ENCODE measurements at regions of chr10 and their contacts with region 1.

Region 1: DNA sequence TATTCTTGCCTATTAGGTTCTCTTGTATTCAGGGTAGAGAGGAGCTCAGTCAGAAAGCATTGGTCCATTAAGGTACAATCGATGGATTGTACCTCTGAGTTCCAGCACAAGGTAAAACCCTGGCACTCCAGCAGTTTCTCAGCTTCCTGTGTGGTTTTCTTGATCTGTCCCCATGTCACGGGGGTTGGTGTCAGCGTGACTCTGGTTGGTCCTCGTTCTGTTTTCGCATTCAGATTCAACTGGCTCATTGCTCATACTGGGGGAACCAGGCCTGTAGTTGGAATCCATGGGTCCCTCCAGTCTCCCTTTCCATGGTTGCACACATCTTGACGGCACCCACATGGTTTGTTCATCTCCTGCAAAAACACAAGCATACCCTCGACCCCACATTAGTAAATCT is 32.7 kb upstream of the RASGEF1A start:
- DNase-seq: peak in 12 of 14 experiments; percentile 23 to 86 (median 44)
- ATAC-seq: peak; percentile 88
- H3K4me3 ChIP-seq: no peak overlapping the region
- H3K4me3 Mint-ChIP-seq: peak overlapping the region; percentile 9
- H3K27ac ChIP-seq: peak overlapping the region in 1 of 2 donors; percentile 24
- H3K27ac Mint-ChIP-seq: peak overlapping the region; percentile 78
- H3K4me1 ChIP-seq: peaks cover 43% of the 10 kb centered on the region
- H3K4me1 Mint-ChIP-seq: peaks cover 72% of the 10 kb centered on the region
- H3K27me3 ChIP-seq: no peaks in the 10 kb centered on the region
- H3K27me3 Mint-ChIP-seq: peaks cover 8% of the 10 kb centered on the region
- CTCF ChIP-seq: no peak

Region 2: DNA sequence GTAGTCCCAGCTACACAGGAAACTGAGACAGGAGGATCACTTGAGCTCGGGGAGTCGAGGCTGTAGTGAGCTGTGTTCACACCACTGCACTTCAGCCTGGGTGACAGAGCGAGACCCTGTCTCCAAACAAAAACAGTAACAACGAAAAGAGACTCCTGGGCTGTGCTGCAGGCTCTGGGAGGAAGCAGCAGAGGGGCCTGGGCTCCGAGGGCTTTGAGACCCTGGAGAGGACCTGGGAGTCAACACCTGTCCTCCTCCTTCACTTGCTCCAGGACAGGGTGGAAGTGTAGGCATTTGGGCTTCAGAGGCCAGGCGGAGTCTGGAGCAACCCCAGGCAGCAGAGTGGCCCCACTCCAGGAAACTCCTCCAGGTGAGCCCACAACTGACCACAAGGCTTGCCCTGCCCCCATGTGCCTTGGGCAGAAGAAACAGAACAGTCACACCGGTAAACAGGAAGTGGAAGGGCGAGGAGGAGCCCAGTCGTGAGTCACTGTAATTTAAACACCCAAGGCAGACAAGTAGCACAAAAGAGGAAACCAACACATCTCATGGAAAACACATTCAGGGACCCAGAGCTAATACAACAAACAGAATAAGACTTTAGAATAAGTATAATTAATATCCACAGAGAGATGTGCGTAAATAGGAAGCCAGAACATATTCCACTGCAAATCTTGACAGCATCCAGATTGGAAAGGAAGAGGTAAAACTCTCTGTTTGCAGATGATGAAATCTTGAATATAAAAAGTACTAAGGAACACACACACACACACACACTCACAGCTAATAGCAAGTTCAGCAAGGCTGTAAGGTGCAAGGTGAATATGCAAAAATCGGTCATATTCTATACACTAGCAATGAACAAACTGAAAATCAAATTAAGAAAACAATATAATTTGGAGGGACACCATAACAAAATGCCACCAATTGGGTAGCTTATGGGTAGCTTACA is 12.2 kb before region 1 on chr10:
- CTCF ChIA-PET with region 1: interaction called, 17 read pairs
- POLR2A ChIA-PET with region 1: interaction called, 10 read pairs
- intact Hi-C with region 1: no loop called
- DNase-seq: peak in 13 of 14 experiments; percentile 39 to 84 (median 62)
- ATAC-seq: peak; percentile 89
- H3K4me3 ChIP-seq: peak overlapping the region; percentile 17
- H3K4me3 Mint-ChIP-seq: peak overlapping the region; percentile 13
- H3K27ac ChIP-seq: peak overlapping the region; percentile 21 to 68
- H3K27ac Mint-ChIP-seq: peak overlapping the region; percentile 77
- H3K4me1 ChIP-seq: peaks cover 38% of the 10 kb centered on the region
- H3K4me1 Mint-ChIP-seq: peaks cover 41% of the 10 kb centered on the region
- H3K27me3 ChIP-seq: peaks cover 0 to under 1% of the 10 kb centered on the region in 2 experiments
- H3K27me3 Mint-ChIP-seq: peaks cover 6% of the 10 kb centered on the region
- CTCF ChIP-seq: no peak

Measured in CD4-positive, alpha-beta T cell (primary cell).